Activated CD4-positive, alpha-beta T cell treated with anti-CD3 and anti-CD28 coated beads for 36 hours (primary cell): ENCODE measurements at regions of chr15 and their contacts with region 1.

Region 1: DNA sequence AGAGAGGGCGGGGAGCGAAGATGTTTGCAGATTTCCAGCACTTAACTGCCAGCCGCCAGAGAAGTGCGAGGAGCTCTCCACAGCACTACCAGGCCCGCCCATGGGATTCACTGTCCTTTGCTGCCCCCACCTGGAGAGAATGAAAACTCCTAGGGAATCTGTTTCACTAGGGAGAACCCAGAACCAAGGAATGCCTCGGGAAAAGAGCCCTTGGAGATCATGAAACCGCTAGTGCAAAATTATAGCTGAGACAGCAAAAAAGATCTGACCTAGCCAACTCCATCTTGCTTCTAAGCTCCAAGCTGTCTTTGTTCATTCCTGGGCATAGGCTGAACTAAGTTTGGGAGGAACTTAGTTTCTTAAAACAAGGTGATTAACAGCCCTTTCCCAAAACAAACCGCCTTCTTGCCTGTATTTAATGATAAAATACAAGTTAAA is 82.6 kb upstream of the GCNT3 start:
- DNase-seq: peak; percentile 81
- ATAC-seq: peak; percentile 85
- H3K4me3 Mint-ChIP-seq: no peak overlapping the region
- H3K27ac Mint-ChIP-seq: no peak overlapping the region
- H3K4me1 Mint-ChIP-seq: peaks cover 11% of the 10 kb centered on the region
- H3K27me3 Mint-ChIP-seq: no peaks in the 10 kb centered on the region

Region 2: DNA sequence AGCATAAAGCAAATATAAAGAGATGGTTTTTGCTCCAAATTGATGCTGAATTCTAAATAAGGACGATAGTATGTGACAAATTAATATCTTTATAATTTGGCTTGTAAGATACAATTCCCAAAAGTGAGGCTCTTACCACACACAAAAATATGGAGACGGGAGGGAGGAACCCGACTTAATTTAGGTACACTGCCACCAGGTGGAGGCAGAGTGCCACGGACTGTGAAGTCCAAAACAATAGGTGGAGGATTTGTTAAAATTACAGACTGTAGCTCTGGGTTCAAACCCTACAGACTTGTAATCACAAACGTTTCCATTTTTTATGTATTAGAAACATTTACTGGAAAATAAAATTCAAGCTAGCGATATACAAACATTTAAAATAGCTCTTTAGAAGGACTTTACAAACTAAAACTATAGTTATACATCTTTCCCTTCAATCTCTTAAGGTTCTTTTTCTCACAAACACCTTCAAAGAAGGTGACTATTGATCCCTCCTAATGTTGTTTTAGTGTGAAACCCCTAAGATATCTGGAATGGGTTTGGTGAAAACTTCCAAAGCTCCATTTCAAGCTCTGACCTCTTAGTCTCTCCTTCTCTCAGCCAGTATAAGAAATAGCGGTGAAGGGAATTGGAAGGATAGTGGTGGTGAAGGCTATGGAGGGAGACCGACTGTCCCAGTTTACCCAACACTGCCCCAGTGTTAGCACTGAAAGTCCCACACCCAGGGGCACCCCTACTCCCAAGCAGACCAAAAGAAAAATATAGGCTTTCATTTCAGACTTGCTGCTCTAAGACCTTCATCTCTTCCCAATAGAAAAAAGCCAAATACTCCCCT is 1301.1 kb before region 1 on chr15:
- CTCF ChIA-PET with region 1: interaction called, 5 read pairs
- POLR2A ChIA-PET with region 1: no interaction called
- intact Hi-C with region 1: loop called in 1 of 2 experiments (anchors 2 kb)
- DNase-seq: peak; percentile 84
- ATAC-seq: peak; percentile 64
- H3K4me3 Mint-ChIP-seq: no peak overlapping the region
- H3K27ac Mint-ChIP-seq: no peak overlapping the region
- H3K4me1 Mint-ChIP-seq: peaks cover 9% of the 10 kb centered on the region
- H3K27me3 Mint-ChIP-seq: peaks cover 2% of the 10 kb centered on the region

Region 3: GRCh38 chr15:58980351-58980939 is 548.5 kb before region 1 on chr15:
- CTCF ChIA-PET with region 1: interaction called, 4 read pairs
- POLR2A ChIA-PET with region 1: no interaction called
- intact Hi-C with region 1: loop called (anchors 1 kb)
- DNase-seq: no peak
- ATAC-seq: no peak
- H3K4me3 Mint-ChIP-seq: no peak overlapping the region
- H3K27ac Mint-ChIP-seq: no peak overlapping the region
- H3K4me1 Mint-ChIP-seq: peaks cover 39% of the 10 kb centered on the region
- H3K27me3 Mint-ChIP-seq: no peaks in the 10 kb centered on the region

Region 4: DNA sequence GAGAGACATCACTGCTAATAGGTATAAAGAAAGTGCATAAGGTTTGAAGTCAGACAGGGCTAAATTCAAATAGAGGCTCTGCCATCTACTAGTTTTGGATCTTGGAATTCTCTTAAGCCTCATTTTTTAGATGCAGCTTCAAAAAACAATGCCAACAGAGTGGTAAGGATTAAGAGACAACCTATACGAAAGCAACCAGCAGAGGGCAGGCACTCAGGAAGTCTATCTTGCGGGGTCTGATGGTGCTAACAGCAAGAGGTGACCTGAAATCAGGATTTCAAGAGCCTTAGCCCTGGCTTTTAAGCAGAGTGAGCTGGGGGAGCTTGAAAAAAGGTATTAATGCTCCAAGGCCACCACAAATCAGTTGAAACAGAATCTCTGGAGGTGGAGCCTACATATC is 281.6 kb before region 1 on chr15:
- CTCF ChIA-PET with region 1: interaction called, 20 read pairs
- POLR2A ChIA-PET with region 1: no interaction called
- intact Hi-C with region 1: loop called in 1 of 2 experiments (anchors 2 kb)
- DNase-seq: peak; percentile 66
- ATAC-seq: peak; percentile 55
- H3K4me3 Mint-ChIP-seq: no peak overlapping the region
- H3K27ac Mint-ChIP-seq: no peak overlapping the region
- H3K4me1 Mint-ChIP-seq: peaks cover 3% of the 10 kb centered on the region
- H3K27me3 Mint-ChIP-seq: no peaks in the 10 kb centered on the region

Region 5: GRCh38 chr15:59516655-59517461 is 12.1 kb before region 1 on chr15:
- CTCF ChIA-PET with region 1: interaction called, 19 read pairs
- POLR2A ChIA-PET with region 1: no interaction called
- intact Hi-C with region 1: no loop called
- DNase-seq: no peak
- ATAC-seq: no peak
- H3K4me3 Mint-ChIP-seq: no peak overlapping the region
- H3K27ac Mint-ChIP-seq: no peak overlapping the region
- H3K4me1 Mint-ChIP-seq: peaks cover 4% of the 10 kb centered on the region
- H3K27me3 Mint-ChIP-seq: no peaks in the 10 kb centered on the region

Region 6: DNA sequence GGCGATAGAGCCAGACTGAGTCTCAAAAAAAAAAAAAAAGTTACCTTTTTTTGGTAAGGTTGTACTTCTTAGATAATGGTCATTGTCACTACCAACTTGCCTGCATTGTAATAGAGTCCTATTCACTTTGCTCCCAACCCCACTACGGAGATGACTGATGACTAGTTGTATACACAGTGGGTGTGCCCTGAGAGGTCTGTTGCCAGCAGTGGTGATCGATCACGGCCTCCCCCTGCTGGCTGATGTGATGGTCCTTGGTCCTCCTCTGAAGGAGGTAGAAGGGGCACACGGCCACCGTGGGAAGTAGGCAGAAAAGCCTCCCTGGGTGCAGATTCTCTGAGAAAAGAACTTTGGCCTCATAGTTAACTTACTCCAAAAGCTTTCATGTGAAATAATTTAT is 93.3 kb after region 1 on chr15:
- CTCF ChIA-PET with region 1: interaction called, 15 read pairs
- POLR2A ChIA-PET with region 1: no interaction called
- intact Hi-C with region 1: loop called (anchors 1 kb)
- DNase-seq: peak; percentile 78
- ATAC-seq: peak; percentile 98
- H3K4me3 Mint-ChIP-seq: no peak overlapping the region
- H3K27ac Mint-ChIP-seq: no peak overlapping the region
- H3K4me1 Mint-ChIP-seq: no peaks in the 10 kb centered on the region
- H3K27me3 Mint-ChIP-seq: peaks cover 9% of the 10 kb centered on the region

Region 7: GRCh38 chr15:59642351-59642750 is 113.4 kb after region 1 on chr15:
- CTCF ChIA-PET with region 1: interaction called, 24 read pairs
- POLR2A ChIA-PET with region 1: no interaction called
- intact Hi-C with region 1: loop called (anchors 5 kb)
- DNase-seq: no peak
- ATAC-seq: no peak
- H3K4me3 Mint-ChIP-seq: no peak overlapping the region
- H3K27ac Mint-ChIP-seq: peak overlapping the region; percentile 42
- H3K4me1 Mint-ChIP-seq: peaks cover 16% of the 10 kb centered on the region
- H3K27me3 Mint-ChIP-seq: no peaks in the 10 kb centered on the region

Region 8: GRCh38 chr15:60155666-60156065 is 626.7 kb after region 1 on chr15:
- CTCF ChIA-PET with region 1: no interaction called
- POLR2A ChIA-PET with region 1: no interaction called
- intact Hi-C with region 1: no loop called
- DNase-seq: peak; percentile 13
- ATAC-seq: peak; percentile 58
- H3K4me3 Mint-ChIP-seq: no peak overlapping the region
- H3K27ac Mint-ChIP-seq: no peak overlapping the region
- H3K4me1 Mint-ChIP-seq: peaks cover 13% of the 10 kb centered on the region
- H3K27me3 Mint-ChIP-seq: peaks cover 21% of the 10 kb centered on the region